Heart right ventricle (tissue), 16 donors: ENCODE measurements at regions of chr20 and their contacts with region 1.

Region 1: GRCh38 chr20:5788385-5788895 is 38.2 kb downstream of the SHLD1 start:
- DNase-seq: peak; percentile 35 to 86
- ATAC-seq: peak; percentile 86 to 98 (median 92)
- H3K4me3 ChIP-seq: no peak overlapping the region
- H3K27ac ChIP-seq: no peak overlapping the region
- H3K4me1 ChIP-seq: peaks cover 0 to 26% (median 14%) of the 10 kb centered on the region in 9 donors
- H3K27me3 ChIP-seq: no peaks in the 10 kb centered on the region
- CTCF ChIP-seq: peak; percentile 84 to 95 (median 92)

Region 2: DNA sequence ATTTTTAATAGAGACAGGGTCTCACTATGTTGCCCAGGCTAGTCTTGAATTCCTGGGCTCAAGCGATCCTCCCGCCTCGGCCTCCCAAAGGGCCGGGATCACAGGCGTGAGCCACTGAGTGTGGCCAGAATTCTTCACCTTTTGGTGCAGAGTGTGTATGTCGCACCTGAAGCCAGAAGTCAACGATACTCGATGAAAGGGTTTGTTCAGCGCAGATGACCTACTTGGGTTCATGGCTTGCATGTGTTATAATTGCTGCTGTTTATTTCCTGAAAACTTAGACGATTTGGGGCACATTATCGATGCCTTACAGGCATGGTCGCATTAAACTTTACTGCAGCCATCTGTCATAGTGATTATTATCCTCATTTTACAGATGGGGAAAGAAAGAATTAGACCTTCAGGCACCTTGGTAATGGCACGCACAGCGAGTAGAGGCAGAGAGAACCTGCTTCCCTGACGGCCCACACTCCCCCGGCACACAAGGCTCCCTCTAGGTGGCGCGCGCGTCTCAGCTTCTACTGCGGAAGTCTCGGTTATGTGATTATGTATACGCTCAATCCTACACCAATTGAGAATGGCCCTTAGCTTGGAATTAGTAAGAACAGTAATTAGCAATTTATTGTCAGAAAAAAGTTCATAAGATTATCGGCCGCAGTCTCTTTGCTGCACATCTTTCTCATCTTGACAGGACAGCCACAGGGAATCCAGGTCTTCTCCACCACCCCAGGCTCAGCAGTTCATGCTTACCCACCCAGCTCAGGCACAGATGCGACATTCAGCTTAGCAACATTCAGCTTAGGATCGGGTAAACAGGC is 258.9 kb before region 1 on chr20:
- intact Hi-C with region 1: loop called in 7 of 10 experiments (anchors 1 to 10 kb)
- DNase-seq: peak; percentile 79 to 83
- ATAC-seq: peak; percentile 67 to 95 (median 90)
- H3K4me3 ChIP-seq: peak overlapping the region in 3 of 10 donors; percentile 8 to 31 (median 15)
- H3K27ac ChIP-seq: no peak overlapping the region
- H3K4me1 ChIP-seq: peaks cover 0 to 32% (median 9%) of the 10 kb centered on the region in 9 donors
- H3K27me3 ChIP-seq: no peaks in the 10 kb centered on the region
- CTCF ChIP-seq: peak; percentile 36 to 88 (median 75)

Region 3: GRCh38 chr20:5569021-5569420 is 219.4 kb before region 1 on chr20:
- intact Hi-C with region 1: loop called in 9 of 10 experiments (anchors 1 to 5 kb)
- DNase-seq: peak in 1 of 2 donors; percentile 44
- ATAC-seq: peak in 4 of 8 donors; percentile 58 to 67 (median 64)
- H3K4me3 ChIP-seq: no peak overlapping the region
- H3K27ac ChIP-seq: peak overlapping the region in 1 of 10 donors; percentile 72
- H3K4me1 ChIP-seq: peaks cover 0 to 40% (median 0%) of the 10 kb centered on the region in 9 donors
- H3K27me3 ChIP-seq: no peaks in the 10 kb centered on the region
- CTCF ChIP-seq: peak; percentile 17 to 67 (median 51)

Region 4: GRCh38 chr20:5757949-5758348 is 30.5 kb before region 1 on chr20:
- intact Hi-C with region 1: no loop called
- DNase-seq: no peak
- ATAC-seq: no peak
- H3K4me3 ChIP-seq: no peak overlapping the region
- H3K27ac ChIP-seq: no peak overlapping the region
- H3K4me1 ChIP-seq: peaks cover 0 to 12% (median 0%) of the 10 kb centered on the region in 9 donors
- H3K27me3 ChIP-seq: no peaks in the 10 kb centered on the region
- CTCF ChIP-seq: no peak